CD4-positive, alpha-beta memory T cell (primary cell): ENCODE measurements at regions of chr2 and their contacts with region 1.

Region 1: GRCh38 chr2:233990261-233990798 is 60.2 kb upstream of the SPP2 start:
- DNase-seq: peak; percentile 82 to 90 (median 87)
- H3K4me3 ChIP-seq: peak overlapping the region in 1 of 2 donors; percentile 16
- H3K4me3 Mint-ChIP-seq: peak overlapping the region in 7 of 8 donors; percentile 57 to 84 (median 64)
- H3K27ac ChIP-seq: peak overlapping the region; percentile 32
- H3K27ac Mint-ChIP-seq: peak overlapping the region; percentile 21 to 96 (median 87)
- H3K4me1 ChIP-seq: peaks cover 65% of the 10 kb centered on the region
- H3K4me1 Mint-ChIP-seq: peaks cover 47 to 70% (median 60%) of the 10 kb centered on the region in 4 donors
- H3K27me3 ChIP-seq: no peaks in the 10 kb centered on the region
- H3K27me3 Mint-ChIP-seq: no peaks in the 10 kb centered on the region

Region 2: DNA sequence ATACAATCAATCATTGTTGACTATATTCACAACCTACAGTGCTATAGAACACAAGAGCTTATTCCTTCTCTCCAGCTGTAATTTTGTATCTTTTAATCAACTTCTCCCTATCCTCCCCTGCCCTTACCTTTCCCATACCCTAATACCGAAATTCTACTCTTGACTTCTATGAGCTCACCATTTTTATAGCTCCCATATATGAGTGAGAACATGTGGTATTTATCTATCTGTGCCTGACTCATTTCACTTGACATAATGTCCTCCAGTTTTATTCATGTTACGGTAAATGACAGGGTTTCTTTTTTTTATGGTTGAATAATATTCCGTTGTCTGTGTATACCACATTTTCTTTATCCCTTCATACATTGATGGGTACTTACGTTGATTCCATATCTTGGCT is 209.6 kb before region 1 on chr2:
- CTCF ChIA-PET with region 1: no interaction called
- POLR2A ChIA-PET with region 1: no interaction called
- intact Hi-C with region 1: no loop called
- DNase-seq: no peak
- H3K4me3 ChIP-seq: no peak overlapping the region
- H3K4me3 Mint-ChIP-seq: no peak overlapping the region
- H3K27ac ChIP-seq: no peak overlapping the region
- H3K27ac Mint-ChIP-seq: no peak overlapping the region
- H3K4me1 ChIP-seq: no peaks in the 10 kb centered on the region
- H3K4me1 Mint-ChIP-seq: peaks cover 0 to 2% (median 0%) of the 10 kb centered on the region in 4 donors
- H3K27me3 ChIP-seq: no peaks in the 10 kb centered on the region
- H3K27me3 Mint-ChIP-seq: peaks cover 19 to 21% of the 10 kb centered on the region in 2 donors

Region 3: DNA sequence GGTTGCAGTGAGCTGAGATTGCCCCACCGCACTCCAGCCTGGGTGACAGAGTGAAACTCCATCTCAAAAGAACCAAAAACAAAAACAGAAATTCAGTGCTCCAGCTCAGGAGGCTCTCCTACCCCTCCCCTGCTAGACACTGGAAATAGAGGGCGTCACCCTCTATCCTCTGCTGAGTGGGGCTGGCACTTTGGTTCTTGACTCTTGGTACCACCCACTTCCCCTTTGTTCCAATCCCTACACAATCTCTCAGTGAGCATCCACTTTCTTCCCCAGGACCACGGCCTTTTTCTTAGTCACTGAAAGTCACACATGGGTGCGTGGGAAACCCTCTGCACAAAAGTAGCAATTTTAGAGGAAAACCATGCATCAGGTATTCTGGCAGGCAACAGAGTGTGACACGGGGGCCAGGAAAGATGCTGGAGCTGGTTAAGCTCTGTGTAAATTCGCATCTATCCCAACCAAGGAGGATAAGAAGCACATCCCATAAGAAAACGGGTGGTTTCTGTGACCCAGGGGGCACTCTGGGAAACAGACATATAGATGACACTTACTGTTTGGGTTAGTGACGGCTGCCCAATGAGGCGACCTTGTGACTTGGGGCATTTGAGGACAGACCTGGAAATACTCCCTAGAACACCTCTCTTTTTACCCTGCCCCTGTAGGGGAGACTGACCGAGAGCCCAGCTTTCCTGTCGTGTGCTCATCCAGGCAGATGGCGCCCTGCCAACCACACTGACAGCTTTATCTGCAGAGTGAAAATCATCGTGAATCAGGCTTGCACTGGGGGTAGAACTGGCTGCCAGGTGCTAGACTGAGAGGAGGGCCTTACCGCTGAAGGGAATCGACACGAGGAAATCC is 143.7 kb before region 1 on chr2:
- CTCF ChIA-PET with region 1: no interaction called
- POLR2A ChIA-PET with region 1: no interaction called
- intact Hi-C with region 1: no loop called
- DNase-seq: no peak
- H3K4me3 ChIP-seq: no peak overlapping the region
- H3K4me3 Mint-ChIP-seq: no peak overlapping the region
- H3K27ac ChIP-seq: no peak overlapping the region
- H3K27ac Mint-ChIP-seq: no peak overlapping the region
- H3K4me1 ChIP-seq: no peaks in the 10 kb centered on the region
- H3K4me1 Mint-ChIP-seq: peaks cover 0 to 2% (median 0%) of the 10 kb centered on the region in 4 donors
- H3K27me3 ChIP-seq: no peaks in the 10 kb centered on the region
- H3K27me3 Mint-ChIP-seq: peaks cover 0 to 1% of the 10 kb centered on the region in 2 donors

Region 4: GRCh38 chr2:234001380-234002160 is 11.2 kb after region 1 on chr2:
- CTCF ChIA-PET with region 1: no interaction called
- POLR2A ChIA-PET with region 1: interaction called, 6 read pairs
- intact Hi-C with region 1: loop called (anchors 1 kb)
- DNase-seq: peak in 4 of 5 donors; percentile 18 to 30 (median 24)
- H3K4me3 ChIP-seq: no peak overlapping the region
- H3K4me3 Mint-ChIP-seq: peak overlapping the region in 7 of 8 donors; percentile 30 to 80 (median 67)
- H3K27ac ChIP-seq: no peak overlapping the region
- H3K27ac Mint-ChIP-seq: peak overlapping the region; percentile 58 to 95 (median 79)
- H3K4me1 ChIP-seq: peaks cover 41% of the 10 kb centered on the region
- H3K4me1 Mint-ChIP-seq: peaks cover 25 to 56% (median 37%) of the 10 kb centered on the region in 4 donors
- H3K27me3 ChIP-seq: no peaks in the 10 kb centered on the region
- H3K27me3 Mint-ChIP-seq: no peaks in the 10 kb centered on the region

Region 5: GRCh38 chr2:234025466-234026185 is 35.3 kb after region 1 on chr2:
- CTCF ChIA-PET with region 1: interaction called, 16 read pairs
- POLR2A ChIA-PET with region 1: interaction called, 29 read pairs
- intact Hi-C with region 1: no loop called
- DNase-seq: peak; percentile 31 to 43 (median 39)
- H3K4me3 ChIP-seq: peak overlapping the region; percentile 48 to 56
- H3K4me3 Mint-ChIP-seq: peak overlapping the region; percentile 46 to 92 (median 84)
- H3K27ac ChIP-seq: peak overlapping the region; percentile 33
- H3K27ac Mint-ChIP-seq: peak overlapping the region; percentile 48 to 90 (median 74)
- H3K4me1 ChIP-seq: peaks cover 55% of the 10 kb centered on the region
- H3K4me1 Mint-ChIP-seq: peaks cover 39 to 74% (median 57%) of the 10 kb centered on the region in 4 donors
- H3K27me3 ChIP-seq: no peaks in the 10 kb centered on the region
- H3K27me3 Mint-ChIP-seq: no peaks in the 10 kb centered on the region

Region 6: GRCh38 chr2:234032279-234032856 is 42.0 kb after region 1 on chr2:
- CTCF ChIA-PET with region 1: interaction called, 8 read pairs
- POLR2A ChIA-PET with region 1: interaction called, 30 read pairs
- intact Hi-C with region 1: loop called (anchors 1 kb)
- DNase-seq: peak; percentile 67 to 87 (median 82)
- H3K4me3 ChIP-seq: no peak overlapping the region
- H3K4me3 Mint-ChIP-seq: peak overlapping the region; percentile 1 to 64 (median 38)
- H3K27ac ChIP-seq: no peak overlapping the region
- H3K27ac Mint-ChIP-seq: peak overlapping the region; percentile 56 to 91 (median 79)
- H3K4me1 ChIP-seq: peaks cover 60% of the 10 kb centered on the region
- H3K4me1 Mint-ChIP-seq: peaks cover 38 to 64% (median 49%) of the 10 kb centered on the region in 4 donors
- H3K27me3 ChIP-seq: no peaks in the 10 kb centered on the region
- H3K27me3 Mint-ChIP-seq: peaks cover 0 to 1% of the 10 kb centered on the region in 2 donors

Region 7: DNA sequence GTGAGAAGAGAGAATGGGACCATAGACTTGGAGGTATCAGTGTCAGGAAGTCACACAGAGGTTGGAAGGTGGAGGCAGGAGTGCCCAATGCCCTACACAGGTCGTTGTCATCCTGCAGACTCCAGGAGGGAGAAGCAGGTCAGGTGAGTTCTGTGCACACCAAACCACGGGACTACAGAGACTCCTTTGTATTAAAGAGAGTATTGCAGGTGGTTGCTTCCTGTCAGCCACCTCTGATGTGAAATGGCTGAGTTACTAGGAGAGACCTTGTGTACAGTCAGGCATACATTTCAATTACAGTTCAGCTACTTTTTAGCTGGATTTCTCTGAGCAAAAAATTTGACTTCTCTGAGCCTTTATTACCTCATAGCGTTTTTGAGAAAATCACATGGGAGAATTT is 111.8 kb after region 1 on chr2:
- CTCF ChIA-PET with region 1: interaction called, 5 read pairs
- POLR2A ChIA-PET with region 1: interaction called, 6 read pairs
- intact Hi-C with region 1: loop called (anchors 1 kb)
- DNase-seq: peak in 4 of 5 donors; percentile 27 to 49 (median 48)
- H3K4me3 ChIP-seq: peak overlapping the region in 1 of 2 donors; percentile 18
- H3K4me3 Mint-ChIP-seq: peak overlapping the region in 6 of 8 donors; percentile 14 to 77 (median 52)
- H3K27ac ChIP-seq: no peak overlapping the region
- H3K27ac Mint-ChIP-seq: peak overlapping the region; percentile 1 to 80 (median 62)
- H3K4me1 ChIP-seq: peaks cover 37% of the 10 kb centered on the region
- H3K4me1 Mint-ChIP-seq: peaks cover 38 to 57% (median 44%) of the 10 kb centered on the region in 4 donors
- H3K27me3 ChIP-seq: no peaks in the 10 kb centered on the region
- H3K27me3 Mint-ChIP-seq: no peaks in the 10 kb centered on the region

Region 8: GRCh38 chr2:234437642-234438304 is 447.4 kb after region 1 on chr2:
- CTCF ChIA-PET with region 1: no interaction called
- POLR2A ChIA-PET with region 1: no interaction called
- intact Hi-C with region 1: no loop called
- DNase-seq: no peak
- H3K4me3 ChIP-seq: no peak overlapping the region
- H3K4me3 Mint-ChIP-seq: peak overlapping the region in 3 of 8 donors; percentile 6 to 43 (median 22)
- H3K27ac ChIP-seq: no peak overlapping the region
- H3K27ac Mint-ChIP-seq: peak overlapping the region in 2 of 7 donors; percentile 68 to 88
- H3K4me1 ChIP-seq: peaks cover 72% of the 10 kb centered on the region
- H3K4me1 Mint-ChIP-seq: peaks cover 46 to 88% (median 65%) of the 10 kb centered on the region in 4 donors
- H3K27me3 ChIP-seq: no peaks in the 10 kb centered on the region
- H3K27me3 Mint-ChIP-seq: no peaks in the 10 kb centered on the region